ENCODE measurements at regions of chr5 and their contacts with region 1.

Region 1: DNA sequence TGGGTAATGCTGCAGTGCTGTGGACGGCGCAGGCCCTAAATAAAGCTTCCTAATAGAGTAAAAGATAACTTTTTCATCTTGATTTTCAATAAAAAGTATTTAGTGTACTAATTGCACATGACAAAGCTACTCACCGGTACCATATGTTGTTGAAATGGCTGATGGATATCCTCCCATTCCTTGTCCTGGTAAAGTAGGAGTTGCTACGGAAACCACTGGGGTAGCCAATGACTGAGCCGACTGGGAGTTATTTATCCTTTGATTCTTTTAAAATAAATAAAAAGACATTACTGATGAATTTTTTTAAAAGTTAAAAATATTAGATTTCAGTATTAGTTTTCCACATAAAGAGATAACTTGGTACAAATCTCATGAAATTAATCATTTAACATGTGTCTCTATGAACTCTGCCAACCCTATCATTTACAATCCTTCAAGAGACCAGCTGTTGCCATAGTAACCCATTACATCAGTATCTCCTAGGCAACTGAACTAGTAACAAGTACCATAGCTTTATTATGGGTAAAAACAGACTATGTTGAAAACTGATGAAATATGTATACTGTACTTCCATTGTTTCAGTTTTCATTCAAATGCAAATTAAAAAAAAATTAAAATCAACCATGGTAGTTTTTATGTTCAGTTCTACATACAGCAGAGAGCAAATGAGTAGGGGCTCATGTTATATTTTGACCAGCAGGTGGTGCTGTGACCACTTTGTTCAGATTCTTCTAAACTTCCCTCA is 153.7 kb downstream of the MEF2C start:
- DNase-seq: peak; percentile 89
- ATAC-seq: peak; percentile 38
- H3K4me3 ChIP-seq: no peak overlapping the region
- H3K4me3 Mint-ChIP-seq: peak overlapping the region; percentile 15
- H3K27ac ChIP-seq: peak overlapping the region; percentile 26 to 85
- H3K27ac Mint-ChIP-seq: peak overlapping the region; percentile 76
- H3K4me1 ChIP-seq: peaks cover 29 to 35% of the 10 kb centered on the region in 2 donors
- H3K4me1 Mint-ChIP-seq: peaks cover 42% of the 10 kb centered on the region
- H3K27me3 ChIP-seq: no peaks in the 10 kb centered on the region
- H3K27me3 Mint-ChIP-seq: no peaks in the 10 kb centered on the region
- CTCF ChIP-seq: peak; percentile 87

Region 2: GRCh38 chr5:88583471-88583870 is 145.8 kb before region 1 on chr5:
- CTCF ChIA-PET with region 1: no interaction called
- POLR2A ChIA-PET with region 1: no interaction called
- intact Hi-C with region 1: no loop called
- DNase-seq: no peak
- ATAC-seq: no peak
- H3K4me3 ChIP-seq: no peak overlapping the region
- H3K4me3 Mint-ChIP-seq: no peak overlapping the region
- H3K27ac ChIP-seq: no peak overlapping the region
- H3K27ac Mint-ChIP-seq: no peak overlapping the region
- H3K4me1 ChIP-seq: no peaks in the 10 kb centered on the region
- H3K4me1 Mint-ChIP-seq: no peaks in the 10 kb centered on the region
- H3K27me3 ChIP-seq: no peaks in the 10 kb centered on the region
- H3K27me3 Mint-ChIP-seq: peaks cover 4% of the 10 kb centered on the region
- CTCF ChIP-seq: no peak

Region 3: DNA sequence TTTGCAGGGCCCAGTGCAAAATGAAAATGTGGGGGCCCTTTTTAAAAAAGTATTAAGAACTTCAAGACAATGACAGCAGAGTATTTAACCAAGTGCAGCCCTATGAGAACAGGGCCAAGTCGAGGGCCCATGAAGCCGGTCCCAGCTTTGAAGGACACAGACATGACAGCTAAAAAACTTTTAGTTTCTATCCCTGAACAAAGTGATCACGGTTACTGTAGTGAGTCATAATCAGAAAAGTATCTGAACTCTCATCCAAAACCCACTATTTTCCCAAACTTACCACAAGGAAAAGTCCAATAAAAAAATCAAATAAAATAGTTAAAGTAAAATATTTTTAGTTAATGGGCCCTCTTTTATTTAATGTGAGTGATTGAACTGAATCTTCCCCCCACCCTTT is 27.7 kb after region 1 on chr5:
- CTCF ChIA-PET with region 1: interaction called, 15 read pairs
- POLR2A ChIA-PET with region 1: no interaction called
- intact Hi-C with region 1: no loop called
- DNase-seq: no peak
- ATAC-seq: no peak
- H3K4me3 ChIP-seq: no peak overlapping the region
- H3K4me3 Mint-ChIP-seq: no peak overlapping the region
- H3K27ac ChIP-seq: peak overlapping the region in 1 of 2 donors; percentile 56
- H3K27ac Mint-ChIP-seq: peak overlapping the region; percentile 78
- H3K4me1 ChIP-seq: no peaks in the 10 kb centered on the region
- H3K4me1 Mint-ChIP-seq: peaks cover 32% of the 10 kb centered on the region
- H3K27me3 ChIP-seq: no peaks in the 10 kb centered on the region
- H3K27me3 Mint-ChIP-seq: no peaks in the 10 kb centered on the region
- CTCF ChIP-seq: no peak

Region 4: GRCh38 chr5:88826646-88827585 is 97.7 kb after region 1 on chr5:
- CTCF ChIA-PET with region 1: interaction called, 18 read pairs
- POLR2A ChIA-PET with region 1: interaction called, 5 read pairs
- intact Hi-C with region 1: loop called (anchors 1 kb)
- DNase-seq: peak; percentile 96
- ATAC-seq: peak; percentile 79
- H3K4me3 ChIP-seq: peak overlapping the region; percentile 3 to 61 (median 35)
- H3K4me3 Mint-ChIP-seq: peak overlapping the region; percentile 78
- H3K27ac ChIP-seq: peak overlapping the region; percentile 92 to 94
- H3K27ac Mint-ChIP-seq: peak overlapping the region; percentile 94
- H3K4me1 ChIP-seq: peaks cover 74 to 94% of the 10 kb centered on the region in 2 donors
- H3K4me1 Mint-ChIP-seq: peaks cover 83% of the 10 kb centered on the region
- H3K27me3 ChIP-seq: no peaks in the 10 kb centered on the region
- H3K27me3 Mint-ChIP-seq: no peaks in the 10 kb centered on the region
- CTCF ChIP-seq: no peak

Region 5: DNA sequence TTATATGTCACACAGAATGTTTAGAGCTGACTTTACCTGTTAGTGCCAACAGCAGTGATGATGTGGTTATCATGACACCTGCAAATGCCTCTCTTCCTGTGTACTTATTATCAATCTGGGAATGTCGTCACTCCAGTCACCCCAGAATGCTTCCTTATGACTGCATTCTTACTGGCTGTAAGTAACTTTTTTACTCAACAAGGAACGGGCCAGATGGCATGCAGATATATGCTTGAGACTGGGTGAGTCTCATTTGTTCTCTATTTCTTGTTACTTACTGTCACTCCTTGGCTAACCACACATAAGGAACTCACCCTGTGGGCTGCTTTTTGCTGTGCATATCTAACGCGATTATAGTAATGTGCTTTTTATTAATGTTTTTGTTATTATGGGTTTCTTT is 539.2 kb after region 1 on chr5:
- CTCF ChIA-PET with region 1: interaction called, 6 read pairs
- POLR2A ChIA-PET with region 1: no interaction called
- intact Hi-C with region 1: loop called (anchors 2 kb)
- DNase-seq: peak; percentile 62
- ATAC-seq: peak; percentile 45
- H3K4me3 ChIP-seq: peak overlapping the region in 1 of 5 experiments; percentile 6
- H3K4me3 Mint-ChIP-seq: peak overlapping the region; percentile 51
- H3K27ac ChIP-seq: peak overlapping the region; percentile 74 to 85
- H3K27ac Mint-ChIP-seq: peak overlapping the region; percentile 82
- H3K4me1 ChIP-seq: peaks cover 71 to 75% of the 10 kb centered on the region in 2 donors
- H3K4me1 Mint-ChIP-seq: peaks cover 71% of the 10 kb centered on the region
- H3K27me3 ChIP-seq: no peaks in the 10 kb centered on the region
- H3K27me3 Mint-ChIP-seq: no peaks in the 10 kb centered on the region
- CTCF ChIP-seq: no peak

Region 6: GRCh38 chr5:89729623-89730301 is 1000.5 kb after region 1 on chr5:
- CTCF ChIA-PET with region 1: interaction called, 63 read pairs
- POLR2A ChIA-PET with region 1: no interaction called
- intact Hi-C with region 1: loop called (anchors 1 kb)
- DNase-seq: peak; percentile 26
- ATAC-seq: peak; percentile 17
- H3K4me3 ChIP-seq: no peak overlapping the region
- H3K4me3 Mint-ChIP-seq: peak overlapping the region; percentile 14
- H3K27ac ChIP-seq: peak overlapping the region in 1 of 2 donors; percentile 31
- H3K27ac Mint-ChIP-seq: peak overlapping the region; percentile 16
- H3K4me1 ChIP-seq: peaks cover 22 to 27% of the 10 kb centered on the region in 2 donors
- H3K4me1 Mint-ChIP-seq: peaks cover 27% of the 10 kb centered on the region
- H3K27me3 ChIP-seq: no peaks in the 10 kb centered on the region
- H3K27me3 Mint-ChIP-seq: no peaks in the 10 kb centered on the region
- CTCF ChIP-seq: no peak

Region 7: GRCh38 chr5:90386099-90386710 is 1656.9 kb after region 1 on chr5:
- CTCF ChIA-PET with region 1: interaction called, 15 read pairs
- POLR2A ChIA-PET with region 1: no interaction called
- intact Hi-C with region 1: loop called (anchors 5 kb)
- DNase-seq: peak; percentile 30
- ATAC-seq: no peak
- H3K4me3 ChIP-seq: no peak overlapping the region
- H3K4me3 Mint-ChIP-seq: no peak overlapping the region
- H3K27ac ChIP-seq: no peak overlapping the region
- H3K27ac Mint-ChIP-seq: no peak overlapping the region
- H3K4me1 ChIP-seq: no peaks in the 10 kb centered on the region
- H3K4me1 Mint-ChIP-seq: no peaks in the 10 kb centered on the region
- H3K27me3 ChIP-seq: peaks cover 0 to 3% (median 0%) of the 10 kb centered on the region in 4 experiments
- H3K27me3 Mint-ChIP-seq: peaks cover 7% of the 10 kb centered on the region
- CTCF ChIP-seq: peak; percentile 81

Measured in B cell (primary cell).